Pancreas (tissue), 10 donors: ENCODE measurements at regions of chr11 and their contacts with region 1.

Region 1: GRCh38 chr11:114099392-114100178 is 40.1 kb downstream of the ZBTB16 start:
- DNase-seq: peak in 2 of 6 donors; percentile 53
- ATAC-seq: peak; percentile 80 to 87 (median 84)
- H3K4me3 ChIP-seq: peak overlapping the region in 1 of 4 donors; percentile 15
- H3K27ac ChIP-seq: peak overlapping the region; percentile 50 to 89 (median 71)
- H3K4me1 ChIP-seq: peaks cover 57 to 71% (median 64%) of the 10 kb centered on the region in 3 donors
- H3K27me3 ChIP-seq: no peaks in the 10 kb centered on the region
- CTCF ChIP-seq: no peak

Region 2: DNA sequence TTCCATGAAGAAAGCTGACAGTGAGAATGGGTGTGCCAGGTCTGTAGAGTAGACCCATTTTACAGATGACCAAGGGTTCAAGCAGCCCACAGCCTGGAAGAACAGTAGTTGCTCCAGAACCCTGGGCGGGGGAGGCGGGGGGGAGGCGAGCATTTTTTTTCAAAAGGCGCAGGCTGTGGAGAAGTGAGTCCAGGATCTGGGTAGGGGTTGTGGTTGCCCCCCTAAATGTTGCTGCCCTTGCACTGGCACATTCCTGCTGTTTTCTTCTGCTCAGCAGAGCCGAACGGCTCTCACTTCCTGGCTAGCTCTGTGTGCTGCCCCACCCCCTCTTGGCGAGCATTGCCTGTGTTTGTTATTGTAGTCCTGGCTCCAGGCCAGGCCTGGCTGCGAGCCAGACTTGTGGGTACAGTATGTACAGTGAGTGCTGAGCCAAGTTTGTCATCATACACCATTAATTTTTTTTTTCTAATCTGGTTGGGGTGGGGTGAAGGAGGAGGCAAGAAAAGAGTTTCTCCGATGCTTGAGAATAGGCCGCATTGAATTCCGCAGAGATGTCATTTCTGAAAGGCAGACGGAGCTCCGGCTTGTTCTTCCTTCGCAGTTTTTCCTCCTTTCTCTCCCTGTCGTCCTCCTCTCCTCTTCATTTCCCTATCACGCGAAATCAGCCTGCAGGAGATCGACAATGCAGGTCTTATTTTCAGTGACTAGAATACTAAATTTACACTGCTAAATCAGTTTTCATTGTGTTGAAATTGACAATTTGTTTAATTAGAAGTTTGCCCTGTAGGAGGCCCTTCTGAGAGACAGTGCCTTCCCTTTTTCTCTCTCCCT is 60.4 kb after region 1 on chr11:
- intact Hi-C with region 1: loop called in 1 of 3 experiments (anchors 10 kb)
- DNase-seq: peak; percentile 97 to 100 (median 100)
- ATAC-seq: peak; percentile 76 to 92 (median 81)
- H3K4me3 ChIP-seq: no peak overlapping the region
- H3K27ac ChIP-seq: peak overlapping the region; percentile 85 to 94 (median 89)
- H3K4me1 ChIP-seq: peaks cover 56 to 69% (median 66%) of the 10 kb centered on the region in 3 donors
- H3K27me3 ChIP-seq: no peaks in the 10 kb centered on the region
- CTCF ChIP-seq: no peak